ENCODE measurements at regions of chrX and their contacts with region 1.

Region 1: DNA sequence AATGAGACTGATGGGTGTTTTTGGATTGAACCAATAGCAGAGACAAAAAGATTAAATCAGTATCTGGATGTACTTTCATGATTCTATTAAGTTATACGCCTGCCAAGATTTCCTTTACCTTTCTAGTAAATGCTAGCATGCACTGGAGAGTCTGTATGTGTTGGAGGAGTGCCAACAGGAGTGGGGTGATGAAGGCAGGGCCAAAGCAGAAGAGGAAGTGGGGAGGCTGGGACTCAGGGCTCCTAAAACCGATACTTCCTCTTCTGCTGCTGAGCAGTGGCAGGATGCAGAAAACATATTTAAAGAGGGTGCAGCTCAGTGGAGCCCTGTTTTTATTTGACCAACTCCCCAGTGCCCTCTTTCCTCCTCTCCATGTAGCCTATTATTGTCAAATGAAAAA is 5.6 kb downstream of the CYSLTR1 start:
- DNase-seq: no peak
- H3K4me3 ChIP-seq: no peak overlapping the region
- H3K27ac ChIP-seq: no peak overlapping the region
- H3K4me1 ChIP-seq: no peaks in the 10 kb centered on the region
- H3K27me3 ChIP-seq: no peaks in the 10 kb centered on the region

Region 2: GRCh38 chrX:78199851-78200250 is 122.0 kb before region 1 on chrX:
- in situ Hi-C with region 1: loop called (anchors 25 kb)
- DNase-seq: peak; percentile 26
- H3K4me3 ChIP-seq: no peak overlapping the region
- H3K27ac ChIP-seq: no peak overlapping the region
- H3K4me1 ChIP-seq: no peaks in the 10 kb centered on the region
- H3K27me3 ChIP-seq: no peaks in the 10 kb centered on the region

Region 3: GRCh38 chrX:79065696-79066095 is 743.9 kb after region 1 on chrX:
- in situ Hi-C with region 1: no loop called
- DNase-seq: no peak
- H3K4me3 ChIP-seq: no peak overlapping the region
- H3K27ac ChIP-seq: no peak overlapping the region
- H3K4me1 ChIP-seq: no peaks in the 10 kb centered on the region
- H3K27me3 ChIP-seq: no peaks in the 10 kb centered on the region

Measured in GM23248 (cell line).